Vagina (tissue), 2 donors: ENCODE measurements at regions of chr12 and their contacts with region 1.

Region 1: GRCh38 chr12:124833693-124834122 is 30.0 kb downstream of the SCARB1 start:
- DNase-seq: no peak
- H3K4me3 ChIP-seq: no peak overlapping the region
- H3K27ac ChIP-seq: peak overlapping the region; percentile 47
- H3K4me1 ChIP-seq: peaks cover 41% of the 10 kb centered on the region
- H3K27me3 ChIP-seq: no peaks in the 10 kb centered on the region
- CTCF ChIP-seq: no peak
- POLR2A ChIP-seq: no peak

Region 2: DNA sequence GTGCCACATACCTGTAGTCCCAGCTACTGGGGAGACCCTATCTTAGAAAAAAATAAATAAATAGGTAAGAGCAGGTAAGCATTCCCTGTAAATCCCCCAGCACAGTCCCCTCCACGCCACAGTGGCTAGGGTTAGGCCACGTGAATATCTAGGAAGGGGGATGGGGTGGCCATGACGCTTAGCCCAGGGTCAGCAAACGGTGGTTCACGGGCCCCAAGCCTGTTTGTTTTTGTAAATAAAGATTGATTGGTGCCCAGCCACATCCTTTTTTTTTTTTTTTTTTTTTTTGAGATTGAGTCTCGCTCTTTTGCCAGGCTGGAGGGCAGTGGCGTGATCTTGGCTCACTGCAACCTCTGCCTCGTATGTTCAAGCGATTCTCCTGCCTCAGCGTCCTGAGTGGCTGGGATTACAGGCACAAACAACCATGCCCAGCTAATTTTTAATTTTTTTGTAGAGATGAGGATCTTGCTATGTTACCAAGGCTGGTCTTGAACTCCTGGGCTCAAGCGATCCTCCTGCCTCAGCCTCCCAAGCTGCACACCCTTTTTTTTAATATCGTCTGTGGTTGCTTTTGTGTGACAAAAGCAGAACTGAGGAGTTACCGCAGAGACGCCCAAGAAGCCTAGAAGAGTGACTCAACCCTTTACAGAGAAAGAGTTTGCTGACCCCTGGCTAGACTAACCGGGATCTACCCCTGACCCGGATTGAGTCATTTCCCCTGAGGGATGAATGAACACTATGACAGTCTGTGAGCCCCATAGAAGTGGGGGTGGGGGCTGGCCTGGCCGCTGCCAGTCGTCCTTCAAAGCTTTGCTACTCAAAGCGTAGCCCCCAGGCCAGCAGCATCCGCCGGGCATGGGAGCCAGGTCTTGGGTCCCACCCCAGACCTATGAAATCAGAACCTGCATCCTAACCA is 152.6 kb before region 1 on chr12:
- intact Hi-C with region 1: no loop called
- DNase-seq: no peak
- H3K4me3 ChIP-seq: no peak overlapping the region
- H3K27ac ChIP-seq: peak overlapping the region; percentile 68
- H3K4me1 ChIP-seq: peaks cover 77% of the 10 kb centered on the region
- H3K27me3 ChIP-seq: no peaks in the 10 kb centered on the region
- CTCF ChIP-seq: no peak
- POLR2A ChIP-seq: no peak

Region 3: GRCh38 chr12:124779161-124780141 is 54.3 kb before region 1 on chr12:
- intact Hi-C with region 1: no loop called
- DNase-seq: no peak
- H3K4me3 ChIP-seq: no peak overlapping the region
- H3K27ac ChIP-seq: no peak overlapping the region
- H3K4me1 ChIP-seq: peaks cover 11% of the 10 kb centered on the region
- H3K27me3 ChIP-seq: no peaks in the 10 kb centered on the region
- CTCF ChIP-seq: no peak
- POLR2A ChIP-seq: no peak

Region 4: DNA sequence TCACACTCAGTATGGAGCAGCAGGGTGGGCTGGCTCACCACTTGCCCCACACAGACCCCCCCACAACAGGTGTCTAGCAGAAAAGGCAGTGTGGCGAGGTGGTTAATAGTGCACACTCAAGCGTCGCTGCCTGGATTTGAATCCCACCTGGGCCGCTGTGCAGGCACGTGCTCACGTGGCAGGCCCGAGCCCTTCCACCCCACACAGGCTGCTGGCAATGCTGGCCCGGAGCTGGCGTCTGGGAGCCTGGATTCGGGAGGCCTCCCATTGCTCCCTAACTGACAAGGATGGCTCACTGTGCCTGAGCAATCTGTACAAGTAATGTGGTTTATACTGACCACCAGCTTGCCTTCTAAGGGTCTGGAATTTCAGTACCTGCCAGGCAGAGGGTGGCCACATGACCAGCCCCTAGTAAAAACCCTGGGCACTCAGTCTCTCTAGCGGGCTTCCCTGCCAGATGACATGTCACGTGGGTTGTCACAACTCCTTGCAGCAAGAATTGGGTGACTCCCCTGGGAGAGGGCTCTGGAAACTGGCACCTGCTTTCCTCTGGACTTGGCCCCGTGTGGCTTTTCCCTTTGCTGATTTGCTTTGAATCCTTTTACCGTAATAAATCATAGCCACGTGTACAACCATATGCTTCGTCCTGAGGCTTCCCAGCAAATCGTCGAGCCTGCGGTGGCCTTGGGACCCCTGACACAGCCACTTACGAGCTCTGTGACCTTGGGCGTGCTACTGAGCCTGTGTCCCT is 42.9 kb before region 1 on chr12:
- intact Hi-C with region 1: loop called (anchors 1 kb)
- DNase-seq: no peak
- H3K4me3 ChIP-seq: no peak overlapping the region
- H3K27ac ChIP-seq: no peak overlapping the region
- H3K4me1 ChIP-seq: no peaks in the 10 kb centered on the region
- H3K27me3 ChIP-seq: no peaks in the 10 kb centered on the region
- CTCF ChIP-seq: no peak
- POLR2A ChIP-seq: no peak

Region 5: DNA sequence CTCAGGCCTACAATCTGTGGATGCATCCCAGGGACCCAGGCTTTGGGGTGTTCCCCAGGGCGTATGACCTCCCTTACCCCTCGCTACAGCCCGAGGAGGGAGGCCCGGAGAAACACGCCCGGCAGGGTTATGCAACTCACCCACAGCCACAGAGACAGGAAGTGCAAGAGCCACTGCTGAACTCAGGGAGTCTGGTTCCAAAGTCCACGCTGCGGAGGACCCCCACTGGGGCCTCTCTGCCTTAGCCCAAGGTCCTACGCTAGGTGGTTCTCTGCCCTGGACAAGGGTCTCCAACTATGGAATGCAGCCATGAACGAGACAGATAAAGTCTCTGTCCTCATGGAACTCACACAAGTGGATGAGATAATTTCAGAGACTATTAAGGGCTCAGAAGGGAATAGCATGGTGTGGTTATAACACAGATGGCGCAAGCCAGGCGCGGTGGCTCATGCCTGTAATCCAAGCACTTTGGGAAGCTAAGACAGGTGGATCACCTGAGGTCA is 18.7 kb after region 1 on chr12:
- intact Hi-C with region 1: no loop called
- DNase-seq: no peak
- H3K4me3 ChIP-seq: no peak overlapping the region
- H3K27ac ChIP-seq: peak overlapping the region; percentile 30
- H3K4me1 ChIP-seq: peaks cover 14% of the 10 kb centered on the region
- H3K27me3 ChIP-seq: no peaks in the 10 kb centered on the region
- CTCF ChIP-seq: no peak
- POLR2A ChIP-seq: no peak

Region 6: DNA sequence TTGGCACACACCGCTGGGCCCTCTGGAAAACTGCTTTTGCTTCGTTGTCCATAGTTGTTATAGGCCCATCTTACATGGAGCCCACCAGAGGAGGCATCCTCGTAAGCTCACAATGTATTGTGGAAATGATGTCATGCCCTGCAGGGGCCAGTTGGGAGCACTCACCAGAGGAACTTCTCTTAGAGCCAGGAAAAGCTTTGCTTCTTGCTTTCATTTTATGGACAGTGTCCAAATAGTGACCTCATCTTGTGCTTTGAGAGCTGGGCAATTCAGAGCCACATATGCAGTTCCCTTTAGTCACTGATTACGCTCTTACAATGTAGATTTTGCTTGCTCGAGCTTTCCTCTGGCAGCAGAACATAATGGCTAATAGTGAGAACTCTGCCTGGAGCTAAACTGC is 507.1 kb after region 1 on chr12:
- intact Hi-C with region 1: no loop called
- DNase-seq: no peak
- H3K4me3 ChIP-seq: no peak overlapping the region
- H3K27ac ChIP-seq: no peak overlapping the region
- H3K4me1 ChIP-seq: no peaks in the 10 kb centered on the region
- H3K27me3 ChIP-seq: no peaks in the 10 kb centered on the region
- CTCF ChIP-seq: no peak
- POLR2A ChIP-seq: no peak